ENCODE measurements at regions of chr16 and their contacts with region 1.

Region 1: DNA sequence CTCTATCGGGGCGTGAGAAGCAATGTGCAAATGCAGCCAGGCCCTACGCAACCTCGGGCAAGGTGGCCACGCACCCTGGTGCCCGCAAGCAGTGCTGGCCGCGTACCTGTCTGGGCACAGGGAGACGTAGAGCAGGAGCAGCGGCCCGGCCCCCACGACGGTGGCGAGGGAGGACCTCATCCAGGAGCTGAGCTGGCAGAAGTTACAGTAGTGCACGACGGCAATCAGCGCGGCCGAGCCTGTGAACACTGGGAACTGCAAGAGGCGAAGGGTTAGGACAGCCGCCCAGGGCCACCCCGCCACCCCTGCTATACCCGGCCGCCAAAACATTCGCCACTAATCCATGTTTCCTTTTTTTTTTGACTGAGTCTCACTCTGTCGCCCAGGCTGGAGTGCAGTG is 96.9 kb upstream of the CREBBP start:
- DNase-seq: no peak
- ATAC-seq: no peak
- H3K4me3 ChIP-seq: no peak overlapping the region
- H3K27ac ChIP-seq: no peak overlapping the region
- H3K4me1 ChIP-seq: peaks cover 0 to 7% (median 0%) of the 10 kb centered on the region in 9 donors
- H3K27me3 ChIP-seq: no peaks in the 10 kb centered on the region
- CTCF ChIP-seq: no peak

Region 2: GRCh38 chr16:4032768-4033167 is 55.4 kb after region 1 on chr16:
- intact Hi-C with region 1: no loop called
- DNase-seq: peak; percentile 16 to 48
- ATAC-seq: peak in 6 of 8 donors; percentile 47 to 93 (median 69)
- H3K4me3 ChIP-seq: no peak overlapping the region
- H3K27ac ChIP-seq: no peak overlapping the region
- H3K4me1 ChIP-seq: peaks cover 0 to 14% (median 0%) of the 10 kb centered on the region in 9 donors
- H3K27me3 ChIP-seq: no peaks in the 10 kb centered on the region
- CTCF ChIP-seq: no peak

Region 3: DNA sequence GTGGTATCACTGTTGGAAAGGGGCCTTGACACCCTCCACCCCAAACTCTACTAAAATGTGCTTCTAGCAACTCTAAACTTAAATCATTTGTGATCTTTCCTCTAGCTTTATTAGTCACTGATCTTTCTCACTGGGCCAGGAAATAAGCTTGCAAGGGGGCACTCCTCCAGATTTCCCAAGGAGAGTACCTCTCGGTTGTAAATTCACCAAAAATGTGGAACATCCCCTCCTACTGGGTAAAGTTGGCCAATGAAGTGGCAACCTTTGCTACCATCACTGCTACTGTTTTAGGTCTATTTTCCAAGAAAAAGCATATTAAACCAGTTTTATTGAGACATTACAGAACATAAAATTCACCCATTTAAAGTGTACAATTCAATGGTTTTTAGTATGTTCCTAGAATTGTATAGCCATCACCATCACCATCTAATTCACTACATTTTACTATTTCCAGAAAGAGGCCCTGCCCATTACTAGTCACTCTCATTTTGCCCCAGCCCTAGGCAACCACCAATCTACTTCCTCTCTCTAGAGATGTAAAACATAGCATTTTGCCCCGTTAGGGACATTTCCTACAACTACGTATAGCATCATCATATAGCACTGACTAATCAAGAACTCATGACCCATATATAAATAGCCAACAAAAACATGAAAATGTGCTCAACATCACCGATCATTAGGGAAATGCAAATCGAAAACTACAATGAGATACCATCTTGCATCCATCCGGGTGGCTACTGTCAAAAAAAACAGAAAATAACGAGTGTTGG is 183.5 kb after region 1 on chr16:
- intact Hi-C with region 1: no loop called
- DNase-seq: no peak
- ATAC-seq: no peak
- H3K4me3 ChIP-seq: no peak overlapping the region
- H3K27ac ChIP-seq: no peak overlapping the region
- H3K4me1 ChIP-seq: no peaks in the 10 kb centered on the region
- H3K27me3 ChIP-seq: no peaks in the 10 kb centered on the region
- CTCF ChIP-seq: peak in 1 of 9 donors; percentile 10

Region 4: GRCh38 chr16:4556112-4556511 is 578.7 kb after region 1 on chr16 and contains the start of gene C16orf96:
- intact Hi-C with region 1: loop called in 1 of 10 experiments (anchors 5 kb)
- DNase-seq: no peak
- ATAC-seq: no peak
- H3K4me3 ChIP-seq: no peak within 1 kb of the TSS
- H3K27ac ChIP-seq: no peak within 1 kb of the TSS
- H3K4me1 ChIP-seq: no peaks in the 10 kb centered on the region
- H3K27me3 ChIP-seq: no peaks in the 10 kb centered on the region
- CTCF ChIP-seq: no peak
- total RNA-seq, gene C16orf96: 0.06 to 0.21 (median 0.09) TPM